K562 (cell line): ENCODE measurements at regions of chr15 and their contacts with region 1.

Region 1: GRCh38 chr15:56869573-56869972 is 48.9 kb upstream of the TCF12 start:
- DNase-seq: peak in 2 of 4 experiments; percentile 23 to 52
- ATAC-seq: peak; percentile 60
- H3K4me3 ChIP-seq: no peak overlapping the region
- H3K27ac ChIP-seq: no peak overlapping the region
- H3K4me1 ChIP-seq: no peaks in the 10 kb centered on the region
- H3K27me3 ChIP-seq: no peaks in the 10 kb centered on the region
- CTCF ChIP-seq: peak; percentile 70 to 77 (median 71)
- EP300 ChIP-seq: no peak
- POLR2A ChIP-seq: no peak
- RAD21 ChIP-seq: peak; percentile 73 to 93

Region 2: DNA sequence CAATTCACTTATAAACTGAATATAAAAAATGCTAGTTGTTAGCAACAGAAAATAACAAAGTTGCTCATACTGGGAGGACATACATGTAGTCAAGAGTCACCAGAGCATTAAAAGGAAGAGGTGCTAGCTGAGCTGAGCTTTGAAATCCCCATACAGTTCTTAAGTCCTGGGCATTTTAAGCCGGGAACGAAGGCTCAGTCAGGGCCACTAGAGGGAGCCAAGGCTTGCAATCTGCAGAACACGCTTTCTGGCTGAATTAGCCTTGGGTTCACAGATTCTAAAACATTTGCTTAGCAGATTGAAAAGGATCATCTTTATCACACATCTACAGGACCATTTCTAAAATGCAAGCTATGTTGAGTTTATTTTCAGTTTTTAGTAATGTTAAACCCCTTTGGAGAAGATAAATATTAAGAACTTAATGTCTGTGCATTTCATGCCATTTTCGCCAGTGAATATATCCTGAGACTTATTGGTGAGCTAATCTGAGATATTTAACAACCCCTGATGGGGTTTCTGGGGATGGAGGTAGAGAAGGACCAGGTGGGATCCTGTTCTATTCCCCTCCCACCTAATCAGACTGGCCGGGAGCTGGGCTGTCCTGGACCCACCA is 378.4 kb before region 1 on chr15:
- CTCF ChIA-PET with region 1: interaction called, 15 read pairs
- POLR2A ChIA-PET with region 1: no interaction called
- in situ Hi-C with region 1: loop called (anchors 5 kb)
- intact Hi-C with region 1: loop called (anchors 1 kb)
- DNase-seq: peak; percentile 52 to 74 (median 65)
- ATAC-seq: peak; percentile 95
- H3K4me3 ChIP-seq: no peak overlapping the region
- H3K27ac ChIP-seq: no peak overlapping the region
- H3K4me1 ChIP-seq: no peaks in the 10 kb centered on the region; a peak in 1 of 5 replicates
- H3K27me3 ChIP-seq: no peaks in the 10 kb centered on the region
- CTCF ChIP-seq: peak; percentile 81 to 90 (median 89)
- EP300 ChIP-seq: no peak
- POLR2A ChIP-seq: no peak
- RAD21 ChIP-seq: peak; percentile 73 to 87

Region 3: GRCh38 chr15:56496635-56497034 is 372.9 kb before region 1 on chr15:
- CTCF ChIA-PET with region 1: interaction called, 15 read pairs
- POLR2A ChIA-PET with region 1: no interaction called
- in situ Hi-C with region 1: loop called (anchors 5 kb)
- intact Hi-C with region 1: loop called (anchors 1 kb)
- DNase-seq: peak; percentile 46 to 69 (median 60)
- ATAC-seq: peak; percentile 96
- H3K4me3 ChIP-seq: no peak overlapping the region
- H3K27ac ChIP-seq: no peak overlapping the region
- H3K4me1 ChIP-seq: no peaks in the 10 kb centered on the region; a peak in 1 of 5 replicates
- H3K27me3 ChIP-seq: no peaks in the 10 kb centered on the region
- CTCF ChIP-seq: peak; percentile 51 to 80 (median 59); a peak in 5 of 6 replicates
- EP300 ChIP-seq: no peak
- POLR2A ChIP-seq: no peak
- RAD21 ChIP-seq: peak; percentile 82 to 94

Region 4: DNA sequence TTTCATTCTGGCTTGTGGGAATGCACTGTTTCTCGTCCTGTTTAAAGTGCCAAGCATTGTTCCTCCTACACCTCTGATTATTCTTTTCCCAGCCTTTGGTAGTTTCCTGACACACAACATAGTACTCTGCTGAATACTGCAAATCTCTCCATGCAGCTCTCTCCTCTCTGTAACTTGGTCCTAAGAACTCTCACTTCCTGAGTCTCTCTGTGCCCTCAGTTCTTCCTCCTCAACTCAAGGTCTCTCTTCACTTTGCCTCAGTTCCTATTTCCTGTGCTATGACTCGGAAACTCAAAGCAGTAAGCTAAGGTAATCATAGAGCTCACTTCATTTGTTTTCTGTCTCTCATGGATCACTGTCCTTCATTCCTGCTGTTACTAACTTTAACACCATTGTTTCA is 249.7 kb before region 1 on chr15:
- CTCF ChIA-PET with region 1: no interaction called
- POLR2A ChIA-PET with region 1: no interaction called
- in situ Hi-C with region 1: no loop called
- intact Hi-C with region 1: loop called (anchors 10 kb)
- DNase-seq: no peak
- ATAC-seq: no peak
- H3K4me3 ChIP-seq: no peak overlapping the region
- H3K27ac ChIP-seq: no peak overlapping the region
- H3K4me1 ChIP-seq: no peaks in the 10 kb centered on the region
- H3K27me3 ChIP-seq: no peaks in the 10 kb centered on the region
- CTCF ChIP-seq: no peak
- EP300 ChIP-seq: no peak
- POLR2A ChIP-seq: no peak
- RAD21 ChIP-seq: no peak

Region 5: GRCh38 chr15:56732921-56733797 is 136.4 kb before region 1 on chr15 and contains the start of gene ZNF280D:
- CTCF ChIA-PET with region 1: interaction called, 3 read pairs
- POLR2A ChIA-PET with region 1: no interaction called
- in situ Hi-C with region 1: no loop called
- intact Hi-C with region 1: loop called (anchors 10 kb)
- DNase-seq: peak; percentile 87 to 92 (median 88)
- ATAC-seq: peak; percentile 94
- H3K4me3 ChIP-seq: peak within 1 kb of the TSS; percentile 46
- H3K27ac ChIP-seq: peak within 1 kb of the TSS; percentile 90
- H3K4me1 ChIP-seq: peaks cover 16 to 38% of the 10 kb centered on the region in 2 experiments
- H3K27me3 ChIP-seq: no peaks in the 10 kb centered on the region
- CTCF ChIP-seq: no peak
- EP300 ChIP-seq: peak; percentile 5; the same call in 1 of the 2 replicates
- POLR2A ChIP-seq: peak; percentile 66
- RAD21 ChIP-seq: peak in 1 of 2 experiments; percentile 8; a peak in 2 of 4 replicates
- polyA plus RNA-seq, gene ZNF280D: 10.2 to 12.1 TPM